ENCODE measurements at regions of chr21 and their contacts with region 1.

Region 1: DNA sequence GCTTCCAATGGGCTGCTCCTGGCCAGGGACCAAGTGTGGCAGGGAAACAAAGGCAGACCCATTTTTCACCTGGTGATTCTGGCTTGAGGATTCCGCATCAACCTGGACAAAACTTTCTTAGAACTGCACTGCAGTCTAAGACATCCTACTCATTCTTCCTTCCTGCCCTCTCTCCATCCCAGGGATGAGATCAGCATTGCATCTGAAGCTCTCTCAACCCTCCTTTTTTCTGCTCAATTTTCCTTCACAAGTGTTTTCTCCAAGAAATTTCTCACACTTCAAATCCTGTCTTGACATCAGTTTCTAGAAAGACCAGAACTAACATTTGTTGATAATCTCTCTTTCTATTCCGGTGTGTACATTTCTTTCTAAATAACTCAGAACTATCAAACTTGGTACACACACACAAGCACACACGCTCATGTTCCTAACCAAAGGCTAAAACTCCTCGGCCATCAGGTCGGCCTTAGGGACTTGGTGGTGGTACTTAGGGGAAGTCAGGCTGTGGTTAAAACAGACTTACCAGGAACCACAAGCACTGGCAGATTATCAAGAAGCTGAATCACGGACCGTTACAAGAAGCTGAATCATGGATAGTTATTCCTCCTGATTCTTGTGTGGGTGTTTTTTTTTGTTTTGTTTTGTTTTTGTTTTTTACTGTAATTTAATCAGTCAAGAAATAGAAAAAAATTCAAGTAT is 21.0 kb upstream of the CXADR start:
- H3K4me3 Mint-ChIP-seq: no peak overlapping the region
- H3K27ac Mint-ChIP-seq: peak overlapping the region; percentile 37
- H3K4me1 Mint-ChIP-seq: peaks cover 30% of the 10 kb centered on the region
- H3K27me3 Mint-ChIP-seq: peaks cover 46% of the 10 kb centered on the region

Region 2: DNA sequence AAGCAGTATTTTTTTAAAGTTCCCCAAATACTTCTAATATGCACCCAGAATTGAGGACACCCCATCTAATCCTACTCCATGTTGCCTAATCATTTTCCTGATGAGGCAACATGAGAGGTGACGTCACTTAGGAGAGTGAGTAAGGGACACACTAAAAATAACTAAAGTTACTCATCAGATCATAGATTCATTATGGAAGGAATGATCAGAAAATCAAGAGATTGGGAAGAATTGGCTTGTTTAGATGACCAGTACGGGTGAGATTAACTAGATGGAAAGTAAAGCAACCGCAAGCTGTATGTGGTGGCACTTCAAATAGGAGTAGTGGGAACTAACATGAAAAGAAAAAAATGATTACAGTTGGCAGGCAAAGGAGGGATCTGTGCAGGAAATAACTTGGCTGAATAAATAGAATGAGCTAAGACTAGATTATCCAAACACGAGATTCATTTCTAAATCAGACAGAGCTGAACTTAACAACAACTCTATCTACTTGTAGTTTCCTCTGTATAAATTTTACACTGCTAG is 40.4 kb before region 1 on chr21:
- intact Hi-C with region 1: no loop called
- H3K4me3 Mint-ChIP-seq: no peak overlapping the region
- H3K27ac Mint-ChIP-seq: no peak overlapping the region
- H3K4me1 Mint-ChIP-seq: peaks cover 17% of the 10 kb centered on the region
- H3K27me3 Mint-ChIP-seq: peaks cover 27% of the 10 kb centered on the region

Region 3: GRCh38 chr21:17537299-17537698 is 45.4 kb after region 1 on chr21:
- intact Hi-C with region 1: loop called (anchors 5 kb)
- H3K4me3 Mint-ChIP-seq: no peak overlapping the region
- H3K27ac Mint-ChIP-seq: no peak overlapping the region
- H3K4me1 Mint-ChIP-seq: peaks cover 42% of the 10 kb centered on the region
- H3K27me3 Mint-ChIP-seq: peaks cover 77% of the 10 kb centered on the region

Measured in dendritic cell treated with granulocyte-macrophage colony-stimulating factor and Interleukin-4, amounts not matched to agents 40 ng/mL and 50 ng/mL, for 4 days (primary cell).